GM12878 (cell line): ENCODE measurements at regions of chr12 and their contacts with region 1.

Region 1: GRCh38 chr12:8544295-8544694 is 3.6 kb upstream of the CLEC4E start:
- DNase-seq: peak; percentile 40
- ATAC-seq: peak; percentile 93
- H3K4me3 ChIP-seq: no peak overlapping the region
- H3K27ac ChIP-seq: no peak overlapping the region
- H3K4me1 ChIP-seq: no peaks in the 10 kb centered on the region
- H3K27me3 ChIP-seq: no peaks in the 10 kb centered on the region
- CTCF ChIP-seq: peak; percentile 74 to 87 (median 86)
- EP300 ChIP-seq: no peak
- POLR2A ChIP-seq: no peak
- RAD21 ChIP-seq: peak; percentile 93

Region 2: GRCh38 chr12:8527250-8528130 is 16.8 kb before region 1 on chr12:
- CTCF ChIA-PET with region 1: interaction called, 13 read pairs
- POLR2A ChIA-PET with region 1: no interaction called
- RAD21 ChIA-PET with region 1: interaction called, 8 read pairs
- SMC1A ChIA-PET with region 1: interaction called, 4 read pairs
- in situ Hi-C with region 1: no loop called
- intact Hi-C with region 1: no loop called
- DNase-seq: no peak
- ATAC-seq: no peak
- H3K4me3 ChIP-seq: no peak overlapping the region
- H3K27ac ChIP-seq: no peak overlapping the region
- H3K4me1 ChIP-seq: no peaks in the 10 kb centered on the region
- H3K27me3 ChIP-seq: peaks cover 2 to 5% of the 10 kb centered on the region in 2 experiments; a peak in 2 of 4 replicates
- CTCF ChIP-seq: no peak
- EP300 ChIP-seq: no peak
- POLR2A ChIP-seq: no peak
- RAD21 ChIP-seq: no peak

Region 3: DNA sequence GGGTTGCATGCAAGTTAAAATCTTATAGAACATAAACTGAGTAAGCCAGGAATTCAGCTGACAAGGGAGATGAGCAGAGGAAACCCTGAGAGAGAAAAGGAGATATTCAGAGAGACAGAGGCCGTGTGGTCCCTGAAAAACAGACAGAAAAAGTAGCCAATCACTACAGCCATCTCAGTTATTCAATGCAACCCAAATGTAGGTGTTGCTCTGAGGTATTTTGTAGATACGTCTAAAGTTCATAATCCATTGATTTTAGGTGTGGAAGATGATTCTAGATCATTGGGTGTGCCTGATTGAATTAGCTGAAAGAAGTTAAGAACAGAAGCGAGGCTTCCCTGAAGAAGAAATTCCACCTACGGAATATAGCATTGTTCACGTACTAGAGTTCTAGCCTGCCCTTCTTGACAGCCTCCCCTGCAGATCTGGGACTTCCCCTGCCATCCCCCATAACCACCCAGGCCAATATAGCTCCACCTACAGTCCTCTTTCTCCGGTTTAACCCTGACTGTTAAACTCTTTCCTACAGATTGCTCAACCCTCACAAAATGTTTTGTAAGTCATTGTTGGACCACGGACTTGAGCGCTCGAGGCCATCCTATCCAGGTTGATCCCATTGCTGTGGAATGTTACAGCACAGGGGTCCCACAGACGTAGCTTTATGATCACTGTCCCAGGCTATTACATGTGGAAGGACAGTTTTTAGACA is 46.7 kb after region 1 on chr12:
- CTCF ChIA-PET with region 1: interaction called, 34 read pairs
- POLR2A ChIA-PET with region 1: no interaction called
- RAD21 ChIA-PET with region 1: interaction called, 19 read pairs
- SMC1A ChIA-PET with region 1: interaction called, 7 read pairs
- in situ Hi-C with region 1: no loop called
- intact Hi-C with region 1: no loop called
- DNase-seq: no peak
- ATAC-seq: peak; percentile 99
- H3K4me3 ChIP-seq: 0 out of 2 replicates have a peak overlapping the region, but pooled peaks have one; percentile 36
- H3K27ac ChIP-seq: no peak overlapping the region
- H3K4me1 ChIP-seq: peaks cover 3% of the 10 kb centered on the region; the same call in 1 of the 2 replicates
- H3K27me3 ChIP-seq: no peaks in the 10 kb centered on the region
- CTCF ChIP-seq: peak; percentile 18 to 25 (median 23); a peak in 2 of 6 replicates
- EP300 ChIP-seq: no peak
- POLR2A ChIP-seq: no peak
- RAD21 ChIP-seq: no peak

Region 4: DNA sequence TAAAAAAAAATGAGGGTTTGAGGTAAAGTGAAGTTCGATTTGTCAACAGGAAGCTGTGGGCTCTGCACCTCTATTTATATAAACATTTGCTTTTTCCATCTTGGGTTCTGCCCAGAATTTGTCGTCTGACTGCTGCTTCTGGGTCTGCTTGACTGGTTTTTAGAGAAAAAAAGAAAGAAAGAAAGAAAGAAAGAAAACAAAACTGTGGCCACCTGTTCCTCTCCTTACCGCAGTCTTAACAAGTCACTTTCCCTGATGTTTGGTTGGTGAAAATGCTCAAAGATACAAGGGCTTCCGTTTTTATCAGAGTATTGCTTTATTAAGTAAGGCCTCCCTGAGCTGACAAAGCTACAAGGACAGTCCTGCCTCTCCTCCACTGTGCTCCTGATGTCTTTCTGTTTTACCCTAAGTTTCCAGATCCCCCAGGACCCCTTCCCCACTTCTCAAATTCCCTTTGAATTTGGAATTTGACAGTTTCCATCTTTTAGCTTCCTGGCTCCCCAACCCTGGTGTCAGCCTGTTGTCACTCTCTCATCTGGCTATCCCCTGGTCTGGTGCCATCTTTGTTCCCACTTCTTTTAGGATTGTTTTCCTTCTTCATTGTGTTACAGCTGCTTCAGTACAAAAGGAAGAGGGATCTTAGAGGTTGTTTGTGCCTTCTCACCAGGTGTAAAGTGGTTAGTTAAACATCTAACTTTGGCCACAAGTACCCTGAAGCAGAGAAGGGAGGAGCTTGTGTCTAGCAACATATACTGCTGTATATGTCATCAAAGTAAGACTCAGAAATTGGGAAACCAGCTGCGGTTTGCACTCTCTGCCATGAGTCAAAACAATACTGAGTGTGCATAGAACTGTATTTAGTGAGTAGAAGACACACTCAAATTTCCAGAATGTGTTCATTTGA is 100.3 kb after region 1 on chr12:
- CTCF ChIA-PET with region 1: interaction called, 10 read pairs
- POLR2A ChIA-PET with region 1: no interaction called
- RAD21 ChIA-PET with region 1: interaction called, 9 read pairs
- SMC1A ChIA-PET with region 1: interaction called, 9 read pairs
- in situ Hi-C with region 1: no loop called
- intact Hi-C with region 1: no loop called
- DNase-seq: peak; percentile 90
- ATAC-seq: peak; percentile 84
- H3K4me3 ChIP-seq: peak overlapping the region; percentile 49; the same call in 1 of the 2 replicates
- H3K27ac ChIP-seq: peak overlapping the region; percentile 97
- H3K4me1 ChIP-seq: peaks cover 41% of the 10 kb centered on the region
- H3K27me3 ChIP-seq: no peaks in the 10 kb centered on the region
- CTCF ChIP-seq: no peak
- EP300 ChIP-seq: peak; percentile 92 to 95
- POLR2A ChIP-seq: peak; percentile 59
- RAD21 ChIP-seq: no peak

Region 5: GRCh38 chr12:8668441-8668840 is 124.1 kb after region 1 on chr12:
- CTCF ChIA-PET with region 1: interaction called, 11 read pairs
- POLR2A ChIA-PET with region 1: no interaction called
- RAD21 ChIA-PET with region 1: interaction called, 3 read pairs
- SMC1A ChIA-PET with region 1: interaction called, 3 read pairs
- in situ Hi-C with region 1: no loop called
- intact Hi-C with region 1: no loop called
- DNase-seq: no peak
- ATAC-seq: no peak
- H3K4me3 ChIP-seq: no peak overlapping the region
- H3K27ac ChIP-seq: no peak overlapping the region
- H3K4me1 ChIP-seq: no peaks in the 10 kb centered on the region
- H3K27me3 ChIP-seq: 0 out of 4 replicates have a peak, but pooled peaks cover 0 to 2% of the 10 kb centered on the region in 2 experiments
- CTCF ChIP-seq: no peak
- EP300 ChIP-seq: no peak
- POLR2A ChIP-seq: no peak
- RAD21 ChIP-seq: no peak

Region 6: GRCh38 chr12:8780389-8780788 is 236.1 kb after region 1 on chr12:
- CTCF ChIA-PET with region 1: no interaction called
- POLR2A ChIA-PET with region 1: no interaction called
- RAD21 ChIA-PET with region 1: no interaction called
- SMC1A ChIA-PET with region 1: no interaction called
- in situ Hi-C with region 1: no loop called
- intact Hi-C with region 1: loop called (anchors 5 kb)
- DNase-seq: no peak
- ATAC-seq: 0 out of 3 replicates have a peak, but pooled peaks have one; percentile 42
- H3K4me3 ChIP-seq: no peak overlapping the region
- H3K27ac ChIP-seq: no peak overlapping the region
- H3K4me1 ChIP-seq: no peaks in the 10 kb centered on the region
- H3K27me3 ChIP-seq: no peaks in the 10 kb centered on the region; a peak in 1 of 4 replicates
- CTCF ChIP-seq: peak; percentile 19 to 25 (median 24); a peak in 2 of 6 replicates
- EP300 ChIP-seq: no peak
- POLR2A ChIP-seq: no peak
- RAD21 ChIP-seq: peak; percentile 40; the same call in 1 of the 2 replicates

Region 7: DNA sequence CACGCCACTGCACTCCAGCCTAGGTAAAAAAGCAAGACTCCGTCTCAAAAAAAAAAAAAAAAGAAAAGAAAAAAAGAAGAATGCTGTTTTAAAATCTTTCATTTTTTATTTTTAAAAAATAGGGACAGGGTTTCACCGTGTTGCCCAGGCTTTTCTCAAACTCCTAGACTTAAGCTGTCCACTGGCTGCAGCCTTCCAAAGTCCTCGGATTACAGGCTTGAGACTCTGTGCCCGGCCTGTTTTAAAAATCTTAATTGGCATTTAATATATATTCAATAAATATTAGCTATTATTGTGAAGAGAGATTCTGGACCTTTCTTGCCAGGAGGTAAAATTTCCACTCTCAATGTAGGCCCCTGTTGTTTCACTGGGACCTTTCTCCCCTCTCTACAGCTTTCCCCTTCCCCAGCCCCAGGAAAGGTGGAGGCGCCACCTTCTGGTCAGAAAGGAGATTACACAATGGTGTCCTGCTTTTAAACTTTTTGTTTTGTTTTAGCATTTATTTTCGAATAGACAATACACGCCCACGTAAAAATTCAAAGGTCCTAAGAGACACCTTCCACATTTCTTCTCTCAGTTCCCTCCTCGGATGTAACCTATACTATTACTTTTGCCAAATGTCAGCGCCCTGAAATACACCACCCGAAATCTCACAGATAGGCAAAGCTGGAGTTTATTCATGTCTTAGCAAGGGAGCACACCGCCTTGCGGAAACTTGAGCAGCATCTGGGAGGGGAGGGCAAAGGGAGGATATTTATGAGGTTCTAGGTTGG is 346.2 kb after region 1 on chr12:
- CTCF ChIA-PET with region 1: interaction called, 53 read pairs
- POLR2A ChIA-PET with region 1: no interaction called
- RAD21 ChIA-PET with region 1: interaction called, 32 read pairs
- SMC1A ChIA-PET with region 1: interaction called, 30 read pairs
- in situ Hi-C with region 1: loop called (anchors 25 kb)
- intact Hi-C with region 1: loop called (anchors 2 kb)
- DNase-seq: peak; percentile 8
- ATAC-seq: peak; percentile 72
- H3K4me3 ChIP-seq: peak overlapping the region; percentile 75
- H3K27ac ChIP-seq: no peak overlapping the region
- H3K4me1 ChIP-seq: no peaks in the 10 kb centered on the region; the same call in 1 of the 2 replicates
- H3K27me3 ChIP-seq: no peaks in the 10 kb centered on the region
- CTCF ChIP-seq: peak; percentile 80 to 85 (median 82)
- EP300 ChIP-seq: 0 out of 4 replicates have a peak, but pooled peaks of 1 of the 2 experiments have one; percentile 15
- POLR2A ChIP-seq: no peak
- RAD21 ChIP-seq: peak; percentile 91